ENCODE measurements at regions of chr10 and their contacts with region 1.

Region 1: DNA sequence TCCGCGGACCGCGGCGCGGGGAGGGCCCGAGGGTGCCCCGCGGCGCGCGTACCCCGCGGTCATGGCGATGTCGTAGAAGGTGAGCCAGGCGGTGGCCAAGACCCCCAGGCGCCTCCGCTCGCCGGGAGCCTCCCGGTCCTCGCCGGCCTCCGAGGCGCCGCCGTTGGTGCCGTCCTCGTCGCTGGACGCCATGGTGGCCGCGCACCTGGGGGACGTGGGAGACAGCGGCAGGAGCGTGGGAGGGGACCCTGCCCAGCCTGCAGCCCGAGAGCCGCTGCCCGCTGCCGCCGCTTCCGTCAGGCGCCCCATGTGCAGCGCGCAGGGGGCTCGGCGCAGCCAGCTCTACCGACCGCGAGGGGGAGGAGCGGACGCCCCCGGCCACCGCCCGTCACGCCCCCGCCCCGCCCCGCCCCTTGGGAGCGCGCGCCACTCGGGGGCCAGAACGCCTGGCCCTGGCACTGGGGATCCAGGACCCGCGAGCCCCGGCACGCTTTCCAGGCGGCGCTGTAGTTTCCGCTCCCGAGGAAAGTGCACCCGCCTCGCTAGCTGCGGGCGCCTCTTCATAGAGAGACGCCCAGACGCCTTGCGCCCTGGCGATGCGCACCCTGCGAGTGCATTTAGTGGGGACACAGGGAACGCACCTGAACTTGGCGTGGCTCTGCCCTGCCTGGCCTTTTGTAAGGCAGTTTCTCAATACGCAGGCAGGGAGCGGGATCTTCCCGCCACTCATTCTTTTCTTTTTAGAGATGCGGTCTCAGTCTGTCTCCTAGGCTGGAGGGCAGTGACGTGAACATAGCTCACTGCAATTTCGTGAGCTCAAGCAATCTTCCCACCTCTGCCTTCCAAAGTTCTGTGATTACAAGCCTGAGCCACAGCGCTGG is at the start of gene HACD1:
- H3K4me3 ChIP-seq: peak within 1 kb of the TSS; percentile 76
- H3K27ac ChIP-seq: peak within 1 kb of the TSS; percentile 82; the same call in 1 of the 2 replicates
- H3K4me1 ChIP-seq: no peaks in the 10 kb centered on the region
- CTCF ChIP-seq: peak; percentile 86

Region 2: GRCh38 chr10:17643755-17644484 is 26.6 kb after region 1 on chr10 and contains the start of gene STAM:
- CTCF ChIA-PET with region 1: no interaction called
- POLR2A ChIA-PET with region 1: interaction called, 47 read pairs
- H3K4me3 ChIP-seq: peak within 1 kb of the TSS; percentile 86
- H3K27ac ChIP-seq: peak within 1 kb of the TSS; percentile 95
- H3K4me1 ChIP-seq: 0 out of 2 replicates have a peak, but pooled peaks cover 3% of the 10 kb centered on the region
- CTCF ChIP-seq: no peak

Region 3: DNA sequence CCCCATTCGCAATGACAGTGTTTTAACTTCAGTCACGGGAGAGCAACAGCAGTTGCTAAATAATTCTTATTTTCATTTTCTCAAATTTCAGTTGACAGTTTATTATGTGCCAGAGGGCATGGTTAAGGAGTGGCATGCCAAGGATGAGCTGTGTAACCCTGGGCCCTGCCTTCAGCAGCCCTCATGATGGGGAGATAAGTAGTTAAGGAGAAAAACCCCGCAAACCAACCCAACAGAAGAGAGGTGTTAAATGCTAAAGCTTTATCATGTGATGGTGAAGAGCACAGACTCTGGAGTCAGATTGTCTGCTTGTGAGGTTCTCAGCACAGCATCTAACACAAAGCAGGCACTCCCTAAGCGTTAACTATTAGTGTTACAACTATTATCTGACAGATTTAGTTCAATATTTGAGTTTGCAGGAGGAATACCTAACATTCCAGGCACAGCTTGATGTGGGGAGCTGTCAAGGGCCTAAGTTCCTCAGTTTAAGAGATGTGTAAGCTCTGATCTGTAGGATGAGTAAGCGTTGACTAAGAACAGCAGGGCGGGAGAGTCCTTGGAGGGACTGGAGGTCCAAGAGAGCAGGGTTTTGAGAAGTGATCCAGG is 56.3 kb after region 1 on chr10:
- CTCF ChIA-PET with region 1: no interaction called
- POLR2A ChIA-PET with region 1: no interaction called
- H3K4me3 ChIP-seq: no peak overlapping the region
- H3K27ac ChIP-seq: no peak overlapping the region
- H3K4me1 ChIP-seq: peaks cover 8% of the 10 kb centered on the region; the same call in 1 of the 2 replicates
- CTCF ChIP-seq: no peak

Region 4: DNA sequence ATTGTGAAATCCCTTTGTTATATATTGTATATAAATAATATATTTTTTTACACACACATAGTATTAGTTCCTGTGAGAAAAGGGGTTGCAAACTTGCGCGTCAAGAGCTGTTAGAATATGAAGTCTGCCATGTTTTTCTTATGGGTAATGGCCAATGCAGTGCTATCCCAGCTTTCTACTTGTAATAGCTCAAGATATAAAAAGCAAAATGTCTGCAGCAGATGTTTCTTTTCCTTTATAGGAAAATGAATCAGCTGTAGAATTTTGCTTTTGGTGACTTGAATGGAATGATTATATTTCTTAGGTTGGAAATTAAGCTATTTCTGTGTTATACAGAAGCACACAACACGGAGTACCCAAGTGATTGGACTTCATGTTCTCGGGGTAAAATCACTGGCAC is 81.4 kb after region 1 on chr10:
- CTCF ChIA-PET with region 1: no interaction called
- POLR2A ChIA-PET with region 1: no interaction called
- H3K4me3 ChIP-seq: no peak overlapping the region
- H3K27ac ChIP-seq: no peak overlapping the region
- H3K4me1 ChIP-seq: no peaks in the 10 kb centered on the region
- CTCF ChIP-seq: no peak

Measured in HEK293 (cell line).